Right lobe of liver (tissue), 6 donors: ENCODE measurements at regions of chr15 and their contacts with region 1.

Region 1: GRCh38 chr15:92803847-92804609 is 96.1 kb upstream of the CHD2 start:
- DNase-seq: peak in 2 of 3 donors; percentile 71 to 78
- ATAC-seq: peak; percentile 60 to 80 (median 76)
- H3K4me3 ChIP-seq: no peak overlapping the region
- H3K27ac ChIP-seq: peak overlapping the region; percentile 93 to 100 (median 100)
- H3K4me1 ChIP-seq: peaks cover 0 to 22% (median 10%) of the 10 kb centered on the region in 4 donors
- H3K27me3 ChIP-seq: no peaks in the 10 kb centered on the region
- CTCF ChIP-seq: no peak
- POLR2A ChIP-seq: peak; percentile 54

Region 2: DNA sequence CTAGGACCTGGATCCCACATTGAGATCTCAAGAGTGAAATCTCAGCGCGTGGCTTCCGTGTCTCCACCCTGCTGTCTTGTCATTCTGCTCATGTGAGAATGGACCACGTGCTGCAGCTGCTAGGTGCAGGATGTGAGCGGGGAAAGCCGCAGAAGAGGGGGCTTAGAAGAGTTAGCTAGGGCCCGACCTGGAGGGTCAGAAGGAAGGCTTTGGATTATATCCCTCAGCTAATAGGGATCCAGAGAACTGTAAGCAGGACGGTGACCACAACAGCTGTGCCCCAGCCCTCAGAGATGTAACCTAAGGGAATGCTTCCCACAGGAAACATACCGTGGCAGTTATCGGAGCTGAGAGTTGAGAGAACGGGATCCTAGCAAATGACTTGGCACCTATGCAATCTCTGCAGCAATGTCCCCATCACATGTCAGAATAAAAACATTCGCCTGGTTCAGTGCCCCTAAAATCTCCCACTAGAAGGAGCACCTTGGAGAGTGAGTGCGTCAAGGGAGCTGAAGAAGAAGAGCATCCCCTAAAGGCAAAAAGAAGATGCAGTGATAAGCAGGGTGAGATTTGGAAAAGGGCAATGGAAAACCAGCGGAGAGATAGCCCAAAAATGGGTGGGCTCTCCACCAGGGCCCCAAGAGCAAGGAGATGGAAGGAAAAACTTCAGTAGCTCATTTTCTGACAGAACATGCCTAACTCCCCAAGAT is 487.3 kb before region 1 on chr15:
- intact Hi-C with region 1: no loop called
- DNase-seq: no peak
- ATAC-seq: no peak
- H3K4me3 ChIP-seq: no peak overlapping the region
- H3K27ac ChIP-seq: no peak overlapping the region
- H3K4me1 ChIP-seq: no peaks in the 10 kb centered on the region
- H3K27me3 ChIP-seq: peaks cover 0 to 6% of the 10 kb centered on the region in 2 donors
- CTCF ChIP-seq: no peak
- POLR2A ChIP-seq: no peak

Region 3: GRCh38 chr15:92625251-92625980 is 178.6 kb before region 1 on chr15:
- intact Hi-C with region 1: no loop called
- DNase-seq: no peak
- ATAC-seq: no peak
- H3K4me3 ChIP-seq: no peak overlapping the region
- H3K27ac ChIP-seq: no peak overlapping the region
- H3K4me1 ChIP-seq: no peaks in the 10 kb centered on the region
- H3K27me3 ChIP-seq: no peaks in the 10 kb centered on the region
- CTCF ChIP-seq: no peak
- POLR2A ChIP-seq: no peak

Region 4: GRCh38 chr15:92917606-92918407 is 113.8 kb after region 1 on chr15:
- intact Hi-C with region 1: loop called in 1 of 2 experiments (anchors 5 kb)
- DNase-seq: peak; percentile 87 to 95 (median 88)
- ATAC-seq: peak; percentile 69 to 84 (median 80)
- H3K4me3 ChIP-seq: peak overlapping the region in 1 of 3 donors; percentile 10
- H3K27ac ChIP-seq: peak overlapping the region; percentile 80 to 99 (median 92)
- H3K4me1 ChIP-seq: peaks cover 0 to 91% (median 27%) of the 10 kb centered on the region in 4 donors
- H3K27me3 ChIP-seq: no peaks in the 10 kb centered on the region
- CTCF ChIP-seq: peak; percentile 92 to 94 (median 94)
- POLR2A ChIP-seq: no peak

Region 5: DNA sequence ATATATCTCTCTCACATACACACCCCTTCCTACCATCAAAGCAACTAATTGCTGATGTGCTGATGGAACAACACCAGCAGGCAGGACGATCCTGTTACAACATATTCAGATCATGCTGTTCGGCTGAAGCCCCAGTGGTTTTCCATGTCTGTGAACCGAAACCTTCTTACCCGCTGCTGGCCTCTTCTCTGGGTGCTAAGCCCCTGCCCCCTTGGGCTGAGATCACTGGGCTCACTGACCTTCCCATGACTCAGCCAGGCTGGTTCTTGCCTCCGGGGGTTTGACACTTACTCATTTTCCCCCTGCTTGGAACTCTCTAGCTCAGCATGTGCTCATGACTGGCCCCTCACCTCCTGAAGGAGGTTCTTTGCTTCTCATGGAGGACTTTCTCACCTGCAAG is 407.0 kb after region 1 on chr15:
- intact Hi-C with region 1: no loop called
- DNase-seq: no peak
- ATAC-seq: no peak
- H3K4me3 ChIP-seq: no peak overlapping the region
- H3K27ac ChIP-seq: no peak overlapping the region
- H3K4me1 ChIP-seq: no peaks in the 10 kb centered on the region
- H3K27me3 ChIP-seq: no peaks in the 10 kb centered on the region
- CTCF ChIP-seq: no peak
- POLR2A ChIP-seq: no peak